WTC11 (cell line): ENCODE measurements at regions of chr22 and their contacts with region 1.

Region 1: DNA sequence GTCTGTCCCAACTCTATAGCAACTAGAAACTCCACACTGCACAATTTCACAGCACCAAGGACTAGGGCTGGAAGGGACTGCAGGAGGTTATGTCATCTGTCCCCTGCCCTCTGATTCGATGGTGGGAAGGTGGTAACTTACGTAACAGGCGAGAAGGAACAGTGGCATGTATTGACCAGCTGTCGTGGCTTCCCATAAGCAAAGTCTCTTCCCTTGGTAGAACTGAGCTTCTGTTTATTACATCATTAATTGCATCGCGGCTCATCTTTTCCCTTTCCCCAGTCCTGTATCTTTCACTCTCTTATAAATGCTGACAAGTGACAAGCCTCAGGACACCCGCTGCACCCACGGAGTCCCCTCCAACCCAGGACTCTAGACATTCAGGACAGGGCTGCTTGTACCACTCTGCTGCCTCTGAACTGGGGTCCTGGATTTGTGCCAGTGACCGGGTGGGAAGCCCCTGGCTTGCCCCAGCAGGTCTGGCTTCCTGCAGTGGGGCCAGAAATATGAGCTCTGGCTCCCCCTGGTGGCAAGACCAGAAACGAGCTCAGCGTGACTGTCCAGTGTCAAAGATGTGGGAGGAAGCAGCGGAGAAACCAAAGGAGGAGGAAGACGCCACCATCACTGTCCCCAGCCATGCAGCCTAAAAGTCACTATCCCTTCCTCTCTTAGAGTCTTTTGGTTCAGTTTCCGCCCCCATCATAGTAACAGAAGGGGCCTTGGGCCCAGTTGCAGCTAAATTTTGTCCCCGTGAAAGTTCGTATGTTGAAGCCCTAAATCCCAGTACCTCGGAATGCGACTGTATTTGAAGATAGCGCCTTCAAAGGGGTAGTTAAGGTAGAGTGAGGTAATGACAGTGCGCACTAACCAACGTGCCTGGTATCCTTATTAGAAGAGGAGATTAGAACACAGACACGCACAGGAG is 84.5 kb downstream of the ISX start:
- DNase-seq: peak; percentile 89
- ATAC-seq: peak; percentile 54
- H3K4me3 Mint-ChIP-seq: no peak overlapping the region
- H3K27ac Mint-ChIP-seq: no peak overlapping the region
- H3K4me1 Mint-ChIP-seq: peaks cover 35% of the 10 kb centered on the region
- H3K27me3 Mint-ChIP-seq: peaks cover 23% of the 10 kb centered on the region
- CTCF ChIP-seq: peak; percentile 82

Region 2: DNA sequence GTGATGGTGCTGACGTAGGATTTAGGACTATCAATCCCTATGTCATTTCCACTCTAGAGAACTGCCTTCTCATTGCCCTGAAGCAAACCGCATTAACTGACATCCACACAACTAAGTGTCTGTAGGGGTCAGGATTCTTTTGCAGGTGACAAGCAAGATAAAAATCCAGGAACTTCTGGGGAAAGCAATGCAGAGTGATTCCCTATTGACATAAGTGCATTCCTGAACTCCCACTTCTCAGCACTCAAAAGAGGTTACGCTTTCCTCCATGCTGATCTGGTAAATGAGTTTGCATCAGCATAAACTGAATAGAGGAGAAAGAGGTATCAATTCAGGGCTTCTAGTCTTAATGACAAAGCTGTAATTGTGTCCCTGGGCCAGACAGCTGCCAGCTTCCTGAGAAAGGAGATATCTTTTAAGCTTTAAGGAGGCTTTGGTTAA is 309.1 kb before region 1 on chr22:
- CTCF ChIA-PET with region 1: interaction called, 10 read pairs
- POLR2A ChIA-PET with region 1: no interaction called
- DNase-seq: no peak
- ATAC-seq: peak; percentile 94
- H3K4me3 Mint-ChIP-seq: peak overlapping the region; percentile 39
- H3K27ac Mint-ChIP-seq: peak overlapping the region; percentile 98
- H3K4me1 Mint-ChIP-seq: peaks cover 77% of the 10 kb centered on the region
- H3K27me3 Mint-ChIP-seq: peaks cover 4% of the 10 kb centered on the region
- CTCF ChIP-seq: no peak

Region 3: GRCh38 chr22:35037089-35037488 is 113.4 kb before region 1 on chr22:
- CTCF ChIA-PET with region 1: interaction called, 94 read pairs
- POLR2A ChIA-PET with region 1: interaction called, 4 read pairs
- DNase-seq: peak; percentile 50
- ATAC-seq: peak; percentile 85
- H3K4me3 Mint-ChIP-seq: no peak overlapping the region
- H3K27ac Mint-ChIP-seq: no peak overlapping the region
- H3K4me1 Mint-ChIP-seq: peaks cover 12% of the 10 kb centered on the region
- H3K27me3 Mint-ChIP-seq: peaks cover 2% of the 10 kb centered on the region; the same call in 1 of the 2 replicates
- CTCF ChIP-seq: peak; percentile 35; the same call in 1 of the 2 replicates

Region 4: GRCh38 chr22:35065796-35066218 is 84.6 kb before region 1 on chr22 and contains the start of gene ISX:
- CTCF ChIA-PET with region 1: interaction called, 19 read pairs
- POLR2A ChIA-PET with region 1: no interaction called
- DNase-seq: no peak
- ATAC-seq: no peak
- H3K4me3 Mint-ChIP-seq: no peak within 1 kb of the TSS
- H3K27ac Mint-ChIP-seq: 0 out of 2 replicates have a peak within 1 kb of the TSS, but pooled peaks have one; percentile 27
- H3K4me1 Mint-ChIP-seq: 0 out of 2 replicates have a peak, but pooled peaks cover 3% of the 10 kb centered on the region
- H3K27me3 Mint-ChIP-seq: no peaks in the 10 kb centered on the region
- CTCF ChIP-seq: no peak
- total RNA-seq, gene ISX: not detected in 3 replicates

Region 5: DNA sequence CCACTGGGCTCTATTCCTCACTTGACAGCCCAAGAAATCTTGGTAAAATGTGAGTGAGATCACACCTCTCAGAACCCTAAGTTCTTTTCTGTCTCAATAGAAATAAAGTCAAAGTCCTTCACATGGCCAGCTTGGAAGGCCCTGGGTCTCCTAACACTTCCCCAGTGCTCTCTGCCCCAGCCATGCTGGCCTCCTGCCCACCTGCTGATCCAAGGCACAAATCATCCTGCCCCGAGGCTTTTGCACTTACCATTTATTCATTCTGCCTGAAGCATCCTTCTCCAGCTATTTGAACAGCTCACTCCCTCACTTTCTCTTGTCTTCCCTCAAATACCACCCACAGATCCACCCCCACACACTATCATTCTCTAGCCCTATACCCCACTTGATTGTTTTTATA is 58.0 kb before region 1 on chr22:
- CTCF ChIA-PET with region 1: no interaction called
- POLR2A ChIA-PET with region 1: no interaction called
- DNase-seq: no peak
- ATAC-seq: no peak
- H3K4me3 Mint-ChIP-seq: no peak overlapping the region
- H3K27ac Mint-ChIP-seq: no peak overlapping the region
- H3K4me1 Mint-ChIP-seq: no peaks in the 10 kb centered on the region
- H3K27me3 Mint-ChIP-seq: peaks cover 3% of the 10 kb centered on the region; the same call in 1 of the 2 replicates
- CTCF ChIP-seq: no peak

Region 6: GRCh38 chr22:35131525-35132000 is 18.9 kb before region 1 on chr22:
- CTCF ChIA-PET with region 1: interaction called, 20 read pairs
- POLR2A ChIA-PET with region 1: no interaction called
- DNase-seq: no peak
- ATAC-seq: no peak
- H3K4me3 Mint-ChIP-seq: no peak overlapping the region
- H3K27ac Mint-ChIP-seq: no peak overlapping the region
- H3K4me1 Mint-ChIP-seq: peaks cover 41% of the 10 kb centered on the region
- H3K27me3 Mint-ChIP-seq: peaks cover 3% of the 10 kb centered on the region; the same call in 1 of the 2 replicates
- CTCF ChIP-seq: no peak